ENCODE measurements at regions of chr10 and their contacts with region 1.

Region 1: DNA sequence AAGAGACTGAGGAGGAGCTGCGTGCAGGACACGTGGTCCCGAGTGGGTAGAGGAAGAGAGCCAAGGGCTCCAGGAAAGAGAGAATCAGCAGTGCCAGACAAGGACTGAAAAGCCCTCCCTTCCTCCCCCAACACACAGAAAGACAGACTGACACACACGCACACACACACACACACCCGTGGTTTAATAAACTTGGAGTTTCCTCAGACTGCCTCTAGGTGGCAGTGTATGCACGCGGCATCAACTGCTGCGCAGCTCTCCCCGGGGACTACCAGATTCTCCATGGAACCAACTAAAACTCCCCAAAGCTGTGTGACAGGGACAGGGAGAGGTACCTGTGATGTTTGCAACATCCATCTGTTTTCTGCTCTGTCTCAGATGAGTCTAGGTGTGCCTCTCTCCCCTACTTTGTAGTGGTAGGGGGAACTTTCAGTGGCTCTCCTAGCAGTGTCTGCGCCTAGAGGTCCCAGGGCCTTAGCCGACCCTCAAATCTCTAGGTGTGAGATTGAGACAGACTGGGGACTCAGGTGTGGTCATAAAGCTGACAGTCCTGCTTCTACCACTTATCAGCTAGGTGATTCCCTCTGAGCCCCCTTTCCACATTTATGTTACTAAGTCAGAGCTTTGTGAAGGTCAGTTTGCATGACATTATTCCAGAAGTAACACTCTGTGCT is 9.3 kb upstream of the TSPAN14 start:
- DNase-seq: peak; percentile 76
- ATAC-seq: peak; percentile 95

Region 2: DNA sequence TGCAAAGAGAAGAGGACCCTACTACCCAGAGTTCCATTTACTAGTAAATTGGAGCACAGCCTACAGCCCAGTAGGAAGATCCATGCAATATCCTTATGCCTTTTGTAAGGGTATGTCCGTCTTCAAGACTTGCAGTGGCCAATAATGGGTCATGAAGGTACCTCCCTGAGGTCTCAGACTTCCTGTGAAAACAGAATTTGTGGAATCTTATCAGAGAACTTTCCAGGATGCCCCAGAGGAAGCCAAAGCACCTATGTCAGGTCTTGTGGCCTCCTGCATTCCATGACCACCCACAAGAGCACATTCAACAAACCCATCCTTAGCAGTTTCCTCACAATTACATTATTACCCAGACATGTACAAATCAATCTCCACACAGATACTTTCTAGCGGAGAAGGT is 55.0 kb before region 1 on chr10:
- intact Hi-C with region 1: loop called (anchors 5 kb)
- DNase-seq: no peak
- ATAC-seq: no peak

Region 3: GRCh38 chr10:80500572-80501380 is 56.0 kb after region 1 on chr10:
- intact Hi-C with region 1: loop called (anchors 1 kb)
- DNase-seq: peak; percentile 79
- ATAC-seq: peak; percentile 18

Region 4: GRCh38 chr10:80589726-80590373 is 145.1 kb after region 1 on chr10:
- intact Hi-C with region 1: loop called (anchors 10 kb)
- DNase-seq: no peak
- ATAC-seq: no peak

Region 5: GRCh38 chr10:80924063-80924952 is 479.5 kb after region 1 on chr10:
- intact Hi-C with region 1: loop called (anchors 10 kb)
- DNase-seq: no peak
- ATAC-seq: peak; percentile 60

Measured in Right ventricle myocardium superior (tissue), 1 donor.